AG04449 (cell line): ENCODE measurements at regions of chr7 and their contacts with region 1.

Region 1: GRCh38 chr7:142782922-142783900 is 12.4 kb downstream of the PRSS2 start:
- DNase-seq: peak; percentile 62
- H3K4me3 ChIP-seq: peak overlapping the region; percentile 44
- CTCF ChIP-seq: peak; percentile 93

Region 2: DNA sequence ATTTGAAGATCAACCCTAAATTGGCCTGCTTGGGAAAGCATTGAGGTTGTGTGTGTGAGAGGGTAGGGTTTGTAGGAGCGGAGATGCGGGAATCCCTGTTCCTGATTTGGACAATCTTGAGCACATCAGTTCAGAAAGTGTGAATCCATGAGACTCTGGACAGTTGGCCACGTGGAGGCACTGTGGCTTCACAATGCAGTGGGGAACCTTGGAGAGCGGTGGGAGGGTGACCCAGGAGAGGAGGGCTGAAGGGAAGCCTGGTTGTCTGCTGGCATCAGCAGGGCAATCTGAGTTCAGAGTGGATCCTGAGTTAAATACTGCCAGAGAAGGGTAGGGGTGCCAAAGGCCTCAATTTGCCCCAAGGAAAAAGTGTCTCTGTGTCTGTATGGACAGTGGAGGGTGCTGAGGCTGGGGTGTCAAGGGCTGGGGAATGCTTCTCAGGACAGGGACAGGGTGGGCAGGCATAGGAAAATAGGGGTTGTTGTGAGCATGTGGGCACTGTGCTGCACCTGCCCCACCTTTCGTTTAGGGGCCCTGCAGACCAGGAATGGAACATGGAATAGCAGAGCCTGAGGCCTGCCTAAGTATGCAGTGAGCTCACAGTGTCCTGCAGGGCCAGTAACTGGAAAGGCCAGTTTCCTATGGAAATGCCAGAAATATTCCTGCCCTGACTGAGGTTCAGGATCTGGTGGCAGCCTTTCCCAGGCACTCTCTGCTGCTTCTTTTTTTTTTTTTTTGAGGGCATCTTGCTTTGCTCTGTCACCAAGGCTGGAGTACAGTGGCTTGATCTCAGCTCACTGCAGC is 362.4 kb before region 1 on chr7:
- CTCF ChIA-PET with region 1: interaction called, 10 read pairs
- POLR2A ChIA-PET with region 1: no interaction called
- DNase-seq: no peak
- H3K4me3 ChIP-seq: no peak overlapping the region
- CTCF ChIP-seq: peak; percentile 75

Region 3: GRCh38 chr7:142496545-142497041 is 286.6 kb before region 1 on chr7:
- CTCF ChIA-PET with region 1: interaction called, 48 read pairs
- POLR2A ChIA-PET with region 1: no interaction called
- DNase-seq: no peak
- H3K4me3 ChIP-seq: no peak overlapping the region
- CTCF ChIP-seq: peak; percentile 73

Region 4: DNA sequence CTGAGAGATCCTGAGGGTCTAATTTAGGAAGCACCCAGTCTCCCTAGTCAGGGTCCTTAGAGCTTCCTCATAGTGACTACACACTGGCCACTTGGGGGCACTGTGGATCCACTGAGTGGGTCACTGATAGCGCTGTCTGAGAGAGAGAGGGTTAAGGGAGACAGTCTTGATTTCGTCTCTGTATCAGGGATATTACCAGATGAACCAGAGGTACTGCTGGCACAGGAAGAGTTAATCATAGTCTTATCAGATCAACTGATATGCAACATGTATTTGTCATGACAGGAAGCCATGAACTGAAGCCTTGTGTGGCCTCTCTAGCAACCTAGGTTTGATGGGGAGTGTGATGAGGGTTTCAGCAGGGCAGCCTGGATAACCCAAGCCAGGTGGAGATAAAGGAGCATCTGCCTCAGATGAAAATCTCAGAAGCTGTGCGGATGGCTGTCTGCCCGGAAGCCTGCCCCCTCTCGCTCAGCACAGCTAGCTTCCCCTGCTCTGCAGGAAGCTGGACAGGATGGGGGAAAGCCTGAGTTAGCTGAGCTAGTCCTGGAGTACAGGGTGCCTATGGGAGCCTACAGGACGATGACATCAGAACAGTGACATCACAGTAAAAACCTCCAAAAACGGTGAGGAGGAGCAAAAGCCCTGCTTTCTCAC is 248.0 kb before region 1 on chr7:
- CTCF ChIA-PET with region 1: interaction called, 222 read pairs
- POLR2A ChIA-PET with region 1: interaction called, 8 read pairs
- DNase-seq: no peak
- H3K4me3 ChIP-seq: no peak overlapping the region; the same call in 1 of the 2 replicates
- CTCF ChIP-seq: peak; percentile 89

Region 5: GRCh38 chr7:142603870-142604448 is 179.3 kb before region 1 on chr7:
- CTCF ChIA-PET with region 1: interaction called, 167 read pairs
- POLR2A ChIA-PET with region 1: no interaction called
- DNase-seq: no peak
- H3K4me3 ChIP-seq: no peak overlapping the region; the same call in 1 of the 2 replicates
- CTCF ChIP-seq: peak; percentile 70

Region 6: DNA sequence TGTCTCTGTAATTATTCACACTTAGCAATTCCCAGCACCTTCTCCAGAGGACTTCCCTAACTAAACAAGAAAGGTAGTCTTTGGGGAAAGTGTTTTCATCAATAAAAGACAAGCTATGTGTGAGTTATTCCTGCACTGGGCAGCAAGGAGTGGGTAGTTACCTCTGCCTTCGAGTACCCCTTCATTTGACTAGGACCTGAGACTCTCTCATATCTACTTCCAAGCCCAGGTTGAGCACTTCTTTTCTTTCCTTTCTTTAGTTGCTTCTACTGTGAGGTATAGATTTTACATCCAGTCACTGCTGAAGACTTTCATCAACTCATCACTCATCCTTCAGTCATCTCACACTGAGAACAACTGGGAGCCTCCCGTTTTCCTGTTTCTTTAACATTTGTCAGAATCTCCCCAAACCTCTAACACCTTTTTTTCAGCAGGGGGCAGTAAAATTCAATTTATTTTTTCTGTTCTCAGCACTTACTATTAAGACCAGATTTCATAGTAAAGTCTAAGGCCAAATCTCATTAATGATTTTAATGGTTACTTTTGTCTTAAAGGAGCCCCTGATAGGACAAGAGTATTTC is 114.0 kb before region 1 on chr7:
- CTCF ChIA-PET with region 1: interaction called, 20 read pairs
- POLR2A ChIA-PET with region 1: no interaction called
- DNase-seq: no peak
- H3K4me3 ChIP-seq: no peak overlapping the region
- CTCF ChIP-seq: no peak

Region 7: GRCh38 chr7:142796608-142797385 is 13.6 kb after region 1 on chr7:
- CTCF ChIA-PET with region 1: interaction called, 46 read pairs
- POLR2A ChIA-PET with region 1: interaction called, 4 read pairs
- DNase-seq: no peak
- H3K4me3 ChIP-seq: peak overlapping the region; percentile 57
- CTCF ChIP-seq: no peak